OCI-LY7 (cell line): ENCODE measurements at regions of chr3 and their contacts with region 1.

Region 1: GRCh38 chr3:135650309-135650708 is 315.2 kb upstream of the PPP2R3A start:
- DNase-seq: no peak
- H3K4me3 ChIP-seq: no peak overlapping the region
- H3K27ac ChIP-seq: no peak overlapping the region
- H3K4me1 ChIP-seq: no peaks in the 10 kb centered on the region
- CTCF ChIP-seq: no peak

Region 2: GRCh38 chr3:134795746-134796280 is 854.5 kb before region 1 on chr3:
- CTCF ChIA-PET with region 1: no interaction called
- POLR2A ChIA-PET with region 1: no interaction called
- intact Hi-C with region 1: no loop called
- DNase-seq: no peak
- H3K4me3 ChIP-seq: peak overlapping the region; percentile 45
- H3K27ac ChIP-seq: no peak overlapping the region
- H3K4me1 ChIP-seq: no peaks in the 10 kb centered on the region
- CTCF ChIP-seq: no peak

Region 3: GRCh38 chr3:136239094-136239493 is 588.8 kb after region 1 on chr3:
- CTCF ChIA-PET with region 1: no interaction called
- POLR2A ChIA-PET with region 1: interaction called, 12 read pairs
- intact Hi-C with region 1: no loop called
- DNase-seq: no peak
- H3K4me3 ChIP-seq: no peak overlapping the region
- H3K27ac ChIP-seq: no peak overlapping the region
- H3K4me1 ChIP-seq: no peaks in the 10 kb centered on the region
- CTCF ChIP-seq: no peak